ENCODE measurements at regions of chr1 and their contacts with region 1.

Region 1: DNA sequence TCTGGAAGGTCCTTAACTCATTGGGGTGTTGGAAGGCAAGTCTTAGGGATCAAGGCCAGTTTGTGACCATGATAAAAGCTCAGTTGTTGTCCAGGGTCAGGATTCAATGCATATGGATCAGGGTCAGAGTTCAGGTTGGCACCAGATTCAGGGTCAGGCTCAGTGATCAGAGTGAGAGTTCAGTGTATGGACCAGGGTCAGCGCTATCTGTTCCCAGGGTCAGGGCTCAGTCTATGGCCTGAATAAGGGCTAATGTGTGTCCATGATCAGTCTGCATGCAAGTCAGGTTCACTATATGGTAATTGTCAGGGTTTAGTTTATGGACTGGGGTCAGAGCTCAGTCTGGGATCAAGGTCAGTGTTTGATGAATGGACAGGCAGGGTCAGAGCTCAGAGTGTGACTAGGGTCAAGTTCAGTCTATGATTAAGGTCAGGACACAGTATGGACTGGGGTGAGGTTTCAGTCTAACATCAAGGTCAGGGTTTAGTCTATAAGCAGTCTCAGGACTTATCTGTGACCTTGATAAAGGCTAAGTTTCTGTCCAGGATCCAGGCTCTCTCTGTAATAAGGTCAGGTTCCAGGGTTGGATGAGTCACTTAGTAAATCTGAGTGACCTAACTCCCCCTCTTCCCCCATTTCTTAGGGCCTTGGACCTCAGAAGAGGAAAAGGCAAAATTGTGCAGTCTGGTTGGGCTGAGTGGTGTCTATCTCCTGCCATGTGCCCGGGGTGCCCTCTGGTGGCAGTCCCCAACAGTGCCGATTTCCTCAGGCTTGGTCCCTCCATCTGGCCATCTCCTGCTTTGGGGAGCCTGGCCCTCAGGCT is 23.8 kb downstream of the KNCN start:
- DNase-seq: no peak
- H3K4me3 ChIP-seq: no peak overlapping the region
- CTCF ChIP-seq: peak; percentile 95

Region 2: DNA sequence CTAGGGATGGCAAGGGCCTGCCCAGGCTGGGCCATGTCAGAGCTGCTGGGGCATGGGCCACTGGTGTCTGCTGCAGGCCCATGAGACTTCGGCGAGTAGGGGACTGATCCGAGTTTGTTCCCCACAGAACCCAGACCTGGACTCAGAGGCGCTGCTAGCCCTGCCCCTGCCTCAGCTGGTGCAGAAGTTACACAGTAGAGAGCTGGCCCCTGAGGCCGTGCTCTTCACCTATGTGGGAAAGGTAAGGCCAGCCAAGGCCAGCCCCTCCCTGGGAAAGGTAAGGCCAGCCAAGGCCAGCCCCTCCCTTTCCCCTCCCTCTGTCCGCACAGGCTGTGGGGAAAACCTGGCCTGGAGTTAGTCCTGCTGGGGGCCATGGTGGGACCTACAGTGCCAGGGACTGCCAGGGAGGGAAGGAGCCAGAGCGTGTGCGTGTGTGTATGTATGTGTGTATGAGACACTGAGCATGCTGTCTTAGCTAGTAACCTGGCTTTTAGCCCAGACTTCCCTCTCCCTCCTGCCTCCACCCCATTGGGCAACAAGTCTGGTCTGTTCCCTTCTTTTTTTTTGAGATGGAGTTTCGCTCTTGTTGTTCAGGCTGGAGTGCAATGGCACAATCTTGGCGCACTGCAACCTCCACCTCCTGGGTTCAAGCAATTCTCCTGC is 125.6 kb before region 1 on chr1:
- CTCF ChIA-PET with region 1: interaction called, 112 read pairs
- POLR2A ChIA-PET with region 1: no interaction called
- DNase-seq: peak; percentile 87
- H3K4me3 ChIP-seq: no peak overlapping the region
- CTCF ChIP-seq: no peak

Region 3: DNA sequence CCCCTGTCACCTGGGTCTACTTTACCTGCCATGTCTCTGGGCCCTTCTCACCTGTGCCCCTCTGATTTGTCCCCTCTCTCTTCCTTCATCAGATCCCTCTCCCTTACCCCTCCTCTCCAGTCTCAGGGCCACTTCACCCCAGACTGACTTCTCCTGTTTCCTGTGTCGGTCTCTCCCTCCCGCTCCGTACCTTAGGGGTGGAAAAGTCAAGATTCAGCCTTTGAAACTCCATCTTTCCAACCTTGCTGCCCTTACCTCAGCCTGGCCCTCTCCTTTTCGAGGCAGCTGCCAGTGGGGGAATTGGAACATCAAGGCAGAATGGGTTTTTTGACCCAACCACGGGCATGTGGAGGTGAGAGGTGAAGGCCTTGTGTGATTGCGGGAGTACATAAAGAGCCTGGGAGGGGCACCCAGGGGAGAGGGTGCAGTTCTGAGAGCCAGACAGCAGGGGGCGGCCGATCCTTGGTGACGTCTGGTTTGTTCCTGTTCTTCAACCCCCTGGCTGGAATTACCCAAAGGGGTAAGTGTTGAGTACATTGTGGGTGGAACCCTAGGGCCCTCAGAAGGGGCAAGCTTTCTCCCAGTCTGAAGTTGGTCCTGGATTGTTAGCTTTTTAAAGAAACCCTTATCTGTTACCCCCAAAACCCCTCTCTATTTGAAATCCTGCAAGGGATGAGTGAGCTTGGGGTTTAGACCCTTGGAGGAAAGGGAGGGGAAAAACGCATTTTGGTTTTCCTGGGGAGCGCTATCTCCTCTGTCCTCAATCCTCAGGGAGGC is 50.3 kb before region 1 on chr1:
- CTCF ChIA-PET with region 1: interaction called, 398 read pairs
- POLR2A ChIA-PET with region 1: no interaction called
- DNase-seq: no peak
- H3K4me3 ChIP-seq: no peak overlapping the region
- CTCF ChIP-seq: peak; percentile 94

Region 4: DNA sequence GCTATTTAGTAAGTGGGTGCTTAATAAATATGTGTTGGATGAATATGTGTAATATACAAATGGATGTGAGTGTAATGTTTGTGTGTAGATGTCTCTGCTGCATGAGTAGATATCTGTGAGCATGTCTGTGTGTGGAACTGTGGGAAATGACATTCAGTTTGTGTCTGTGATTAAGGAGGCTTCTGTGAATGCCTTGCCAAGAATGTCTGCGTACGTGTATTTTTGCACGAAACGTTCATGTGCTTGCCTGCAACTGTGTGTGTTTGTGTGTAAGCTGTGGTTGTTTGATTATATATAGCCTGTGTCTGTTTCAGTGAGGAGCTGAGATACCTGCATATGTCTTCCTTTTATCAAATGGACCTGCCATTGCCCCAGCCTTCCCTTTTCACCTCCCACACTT is 24.3 kb before region 1 on chr1:
- CTCF ChIA-PET with region 1: interaction called, 16 read pairs
- POLR2A ChIA-PET with region 1: no interaction called
- DNase-seq: no peak
- H3K4me3 ChIP-seq: no peak overlapping the region
- CTCF ChIP-seq: no peak

Region 5: DNA sequence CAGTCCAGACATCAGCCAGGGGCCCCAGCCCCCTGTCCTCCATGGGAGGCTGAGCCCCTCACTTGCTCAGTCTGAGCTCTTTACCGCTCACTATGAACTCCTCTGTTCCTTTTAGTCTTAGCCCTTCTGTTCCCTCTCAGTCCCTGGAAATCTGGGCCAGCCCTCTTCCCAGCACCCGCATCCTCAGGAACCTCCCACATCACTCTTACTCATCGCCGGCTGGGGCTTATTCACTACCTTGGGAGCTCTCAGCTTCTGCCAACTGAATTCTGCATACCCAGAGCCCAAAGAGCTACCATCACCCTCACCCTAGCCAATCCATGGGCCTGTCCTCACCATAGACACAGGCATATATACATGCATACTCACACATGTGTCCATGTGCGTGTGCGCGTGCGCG is 12.3 kb after region 1 on chr1:
- CTCF ChIA-PET with region 1: interaction called, 105 read pairs
- POLR2A ChIA-PET with region 1: no interaction called
- DNase-seq: no peak
- H3K4me3 ChIP-seq: no peak overlapping the region
- CTCF ChIP-seq: no peak

Region 6: GRCh38 chr1:46562498-46562897 is 34.8 kb after region 1 on chr1:
- CTCF ChIA-PET with region 1: no interaction called
- POLR2A ChIA-PET with region 1: no interaction called
- DNase-seq: no peak
- H3K4me3 ChIP-seq: no peak overlapping the region
- CTCF ChIP-seq: no peak

Region 7: GRCh38 chr1:46630719-46631118 is 103.0 kb after region 1 on chr1:
- CTCF ChIA-PET with region 1: no interaction called
- POLR2A ChIA-PET with region 1: no interaction called
- DNase-seq: no peak
- H3K4me3 ChIP-seq: no peak overlapping the region
- CTCF ChIP-seq: no peak

Region 8: DNA sequence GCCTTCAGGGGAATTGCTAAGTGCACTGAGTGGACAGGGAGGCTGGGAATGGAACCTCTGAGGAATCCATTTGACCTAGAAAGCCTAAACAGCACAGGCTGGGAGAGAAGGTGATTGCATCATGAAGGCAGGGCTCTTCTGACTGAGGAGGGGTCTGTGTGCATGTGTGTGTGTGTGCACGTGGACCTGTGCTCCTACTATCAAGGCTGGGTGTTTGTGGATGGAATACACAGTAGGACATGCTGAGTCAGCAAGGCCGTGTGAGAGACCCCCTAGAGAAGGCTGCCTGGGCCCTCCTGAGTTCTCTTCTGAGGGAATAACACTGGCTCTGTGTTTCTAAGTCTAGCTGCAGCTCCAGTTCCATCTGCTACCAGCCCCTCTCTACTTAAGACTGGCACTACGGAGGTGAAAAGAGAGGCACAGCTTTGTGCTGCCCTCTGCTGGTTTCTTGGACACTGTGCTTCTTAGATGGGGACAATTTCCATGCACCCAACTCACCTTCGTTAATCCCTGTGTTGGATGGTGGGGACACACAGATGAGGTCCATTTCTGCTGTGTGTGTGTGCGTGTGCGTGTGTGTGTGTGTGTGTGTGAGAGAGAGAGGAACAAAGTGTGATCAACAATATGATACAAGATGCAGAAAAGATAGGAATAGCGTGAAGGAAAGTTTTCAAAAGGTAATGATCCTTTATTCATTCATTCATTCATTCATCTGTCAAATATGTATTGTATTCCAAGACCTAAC is 197.5 kb after region 1 on chr1:
- CTCF ChIA-PET with region 1: interaction called, 50 read pairs
- POLR2A ChIA-PET with region 1: no interaction called
- DNase-seq: peak; percentile 41
- H3K4me3 ChIP-seq: no peak overlapping the region
- CTCF ChIP-seq: peak; percentile 87